ENCODE measurements at regions of chr6 and their contacts with region 1.

Region 1: DNA sequence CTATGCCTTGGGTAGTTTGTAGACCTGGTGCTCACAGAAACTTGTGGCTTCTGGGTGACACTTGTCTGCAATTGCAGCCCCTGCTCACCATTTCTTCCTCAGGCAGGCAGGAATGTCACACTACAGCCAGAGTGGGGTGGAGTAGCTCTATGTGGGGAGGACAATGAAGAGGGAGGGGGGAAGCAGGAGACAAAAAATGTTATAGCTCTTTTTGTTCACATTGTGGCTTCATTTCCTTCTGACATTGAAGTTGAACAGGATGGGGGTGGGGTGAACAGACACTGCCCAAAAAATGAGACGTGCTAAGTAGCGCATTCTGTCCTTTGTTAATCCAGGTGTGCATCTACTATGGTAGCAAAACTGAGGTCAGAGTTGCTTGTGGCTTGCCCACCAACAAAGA is at the start of gene THEMIS:
- DNase-seq: peak; percentile 43
- H3K4me3 Mint-ChIP-seq: peak within 1 kb of the TSS; percentile 91
- H3K27ac Mint-ChIP-seq: peak within 1 kb of the TSS; percentile 96
- H3K4me1 Mint-ChIP-seq: peaks cover 66% of the 10 kb centered on the region
- H3K27me3 Mint-ChIP-seq: no peaks in the 10 kb centered on the region
- total RNA-seq, gene THEMIS: 10.6 and 11.3 TPM in 2 replicates

Region 2: DNA sequence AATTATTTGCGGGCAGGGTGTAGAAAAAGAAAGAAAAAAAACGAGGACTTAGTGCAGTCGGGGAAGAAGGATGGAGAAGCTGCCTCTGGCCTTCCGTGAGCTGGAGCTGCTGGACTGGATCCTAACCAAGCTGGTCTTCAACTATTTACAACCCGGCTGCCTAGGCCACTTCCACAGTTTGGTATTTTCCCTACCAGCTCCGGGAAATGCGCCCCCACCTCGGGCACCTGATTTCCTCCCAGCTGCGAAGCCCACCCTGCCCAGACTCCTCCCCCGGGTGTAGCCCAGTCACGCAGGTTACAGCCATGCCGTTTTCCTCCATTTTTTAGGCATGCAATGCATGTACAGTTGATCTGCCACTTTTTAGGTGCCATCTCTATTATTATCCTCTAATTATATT is 21.2 kb before region 1 on chr6:
- intact Hi-C with region 1: loop called (anchors 1 kb)
- DNase-seq: no peak
- H3K4me3 Mint-ChIP-seq: peak overlapping the region; percentile 60
- H3K27ac Mint-ChIP-seq: peak overlapping the region; percentile 56
- H3K4me1 Mint-ChIP-seq: peaks cover 65% of the 10 kb centered on the region
- H3K27me3 Mint-ChIP-seq: no peaks in the 10 kb centered on the region

Region 3: DNA sequence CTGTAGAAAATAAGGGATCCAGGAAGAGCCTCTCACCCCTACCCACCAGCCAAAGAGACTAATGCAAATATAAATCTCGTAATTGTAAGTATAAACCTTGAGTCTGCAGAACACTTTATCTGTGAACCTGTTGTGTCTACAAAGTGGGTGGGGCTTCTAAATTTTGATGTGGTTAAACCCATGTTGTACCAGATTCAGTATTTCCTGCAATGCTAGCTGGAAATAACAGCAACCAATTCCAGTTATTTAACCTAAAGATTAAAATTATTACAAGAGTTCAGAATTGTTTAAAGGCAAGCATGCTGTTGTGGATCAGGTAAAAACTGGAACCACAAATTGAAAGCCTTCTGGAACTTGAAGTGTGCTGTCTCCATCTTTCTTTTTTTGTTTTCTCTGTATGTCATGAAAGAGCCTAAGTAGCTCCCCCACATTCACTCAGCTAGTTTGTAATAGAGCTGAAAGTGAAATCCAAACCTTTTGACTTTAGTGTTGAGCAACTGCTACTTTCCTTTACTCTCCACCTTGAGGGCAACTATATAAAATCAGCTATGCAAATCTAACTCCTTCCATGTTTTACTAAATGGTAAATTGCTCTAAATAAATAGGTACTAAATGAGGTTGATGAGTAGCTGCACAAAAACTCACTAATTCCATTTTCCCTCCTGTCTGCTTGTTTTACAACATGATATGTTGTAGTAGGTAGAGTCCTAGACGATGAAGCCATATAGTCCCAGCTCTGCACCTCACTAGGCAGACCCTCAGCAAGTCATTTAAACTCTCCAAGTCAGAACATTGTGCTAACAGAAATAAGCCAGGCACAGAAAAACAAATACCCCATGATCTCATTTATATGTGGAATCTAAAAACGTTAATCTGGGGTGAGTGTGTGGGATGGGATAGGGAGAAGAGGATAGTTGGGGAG is 17.8 kb after region 1 on chr6:
- intact Hi-C with region 1: loop called (anchors 1 kb)
- DNase-seq: no peak
- H3K4me3 Mint-ChIP-seq: peak overlapping the region; percentile 71
- H3K27ac Mint-ChIP-seq: peak overlapping the region; percentile 61
- H3K4me1 Mint-ChIP-seq: peaks cover 67% of the 10 kb centered on the region
- H3K27me3 Mint-ChIP-seq: no peaks in the 10 kb centered on the region

Region 4: GRCh38 chr6:127938701-127939100 is 37.8 kb after region 1 on chr6:
- intact Hi-C with region 1: loop called (anchors 1 kb)
- DNase-seq: no peak
- H3K4me3 Mint-ChIP-seq: no peak overlapping the region
- H3K27ac Mint-ChIP-seq: peak overlapping the region; percentile 87
- H3K4me1 Mint-ChIP-seq: peaks cover 51% of the 10 kb centered on the region
- H3K27me3 Mint-ChIP-seq: no peaks in the 10 kb centered on the region

Region 5: DNA sequence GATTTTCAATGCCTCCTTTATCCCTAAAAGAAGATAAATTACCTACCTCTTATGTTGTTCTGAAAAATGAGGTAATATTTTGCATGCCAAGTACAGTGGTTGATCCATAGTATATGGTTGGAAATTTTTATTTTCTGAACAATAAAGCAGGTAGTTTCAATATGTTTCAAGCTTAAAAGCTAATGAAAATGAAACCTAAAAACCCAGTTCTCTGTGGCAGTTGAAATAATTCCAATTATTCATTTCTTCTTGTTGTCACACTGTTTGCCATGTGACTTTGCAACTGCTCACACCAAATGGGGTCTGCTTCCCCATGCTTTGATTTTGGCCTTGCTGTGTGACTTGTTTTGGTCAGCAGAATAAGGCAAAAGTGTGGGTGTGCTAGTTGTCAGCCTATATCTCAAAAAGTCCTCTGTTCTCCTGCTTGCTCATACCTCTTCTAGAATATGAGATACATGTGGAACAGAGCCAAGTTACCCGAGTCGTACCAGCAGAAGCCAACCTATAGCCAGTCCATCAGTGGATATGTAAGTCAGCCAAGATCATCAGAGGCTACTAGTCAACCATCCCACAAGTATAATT is 197.2 kb after region 1 on chr6:
- intact Hi-C with region 1: loop called (anchors 5 kb)
- DNase-seq: no peak
- H3K4me3 Mint-ChIP-seq: no peak overlapping the region
- H3K27ac Mint-ChIP-seq: no peak overlapping the region
- H3K4me1 Mint-ChIP-seq: peaks cover 22% of the 10 kb centered on the region
- H3K27me3 Mint-ChIP-seq: no peaks in the 10 kb centered on the region

Region 6: DNA sequence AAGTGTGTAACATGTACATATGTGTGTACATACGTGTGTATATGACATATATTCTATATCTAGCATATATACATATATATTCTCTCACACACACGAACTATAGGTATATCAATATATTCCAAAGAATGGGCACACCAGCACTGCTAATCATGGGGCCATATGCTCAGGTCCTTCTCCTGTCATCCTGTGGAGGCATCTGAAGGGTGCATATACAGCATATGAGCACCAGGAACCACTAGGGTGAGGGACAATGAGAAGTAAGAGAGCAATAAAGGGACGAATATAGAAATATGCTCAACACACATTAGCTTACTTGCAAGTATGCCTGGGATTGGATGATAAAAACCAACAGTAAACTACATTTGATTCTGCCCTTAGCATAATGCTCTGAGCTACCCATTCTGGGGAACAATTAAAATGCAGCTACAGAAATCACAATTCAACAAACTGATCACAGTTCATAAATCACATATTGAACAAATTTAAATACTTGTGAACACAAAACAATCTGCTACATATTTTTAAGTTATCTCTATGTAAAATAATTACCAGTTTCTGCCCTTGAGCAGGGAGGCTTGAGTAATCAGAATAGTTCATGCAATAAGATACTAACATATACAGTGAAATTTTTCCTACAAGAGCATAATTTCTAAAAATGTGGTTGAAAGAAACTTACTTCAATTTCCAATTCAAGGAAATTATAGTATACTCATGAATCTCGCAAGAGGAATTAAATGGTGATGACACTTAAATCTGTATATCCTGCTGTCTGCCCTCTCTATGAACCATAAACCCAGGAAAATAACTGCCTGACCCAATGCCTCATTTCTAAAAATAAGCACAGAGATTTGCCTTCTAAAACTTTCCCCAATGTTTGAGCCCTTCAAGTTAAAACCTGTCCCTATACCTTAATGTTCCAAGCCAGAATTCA is 272.1 kb after region 1 on chr6:
- intact Hi-C with region 1: no loop called
- DNase-seq: no peak
- H3K4me3 Mint-ChIP-seq: no peak overlapping the region
- H3K27ac Mint-ChIP-seq: no peak overlapping the region
- H3K4me1 Mint-ChIP-seq: no peaks in the 10 kb centered on the region
- H3K27me3 Mint-ChIP-seq: peaks cover 4% of the 10 kb centered on the region

Region 7: GRCh38 chr6:128259730-128260685 is 359.1 kb after region 1 on chr6:
- intact Hi-C with region 1: loop called (anchors 1 kb)
- DNase-seq: no peak
- H3K4me3 Mint-ChIP-seq: peak overlapping the region; percentile 25
- H3K27ac Mint-ChIP-seq: no peak overlapping the region
- H3K4me1 Mint-ChIP-seq: peaks cover 30% of the 10 kb centered on the region
- H3K27me3 Mint-ChIP-seq: no peaks in the 10 kb centered on the region